Activated B cell treated with CpG ODN at 0.5 μM for 24 hours (primary cell): ENCODE measurements at regions of chrX and their contacts with region 1.

Region 1: GRCh38 chrX:23817172-23817601 is 34.2 kb downstream of the SAT1 start:
- DNase-seq: peak; percentile 27
- ATAC-seq: peak; percentile 98
- H3K4me3 Mint-ChIP-seq: no peak overlapping the region
- H3K27ac Mint-ChIP-seq: peak overlapping the region; percentile 93
- H3K4me1 Mint-ChIP-seq: peaks cover 6% of the 10 kb centered on the region
- H3K27me3 Mint-ChIP-seq: no peaks in the 10 kb centered on the region
- CTCF ChIP-seq: no peak

Region 2: DNA sequence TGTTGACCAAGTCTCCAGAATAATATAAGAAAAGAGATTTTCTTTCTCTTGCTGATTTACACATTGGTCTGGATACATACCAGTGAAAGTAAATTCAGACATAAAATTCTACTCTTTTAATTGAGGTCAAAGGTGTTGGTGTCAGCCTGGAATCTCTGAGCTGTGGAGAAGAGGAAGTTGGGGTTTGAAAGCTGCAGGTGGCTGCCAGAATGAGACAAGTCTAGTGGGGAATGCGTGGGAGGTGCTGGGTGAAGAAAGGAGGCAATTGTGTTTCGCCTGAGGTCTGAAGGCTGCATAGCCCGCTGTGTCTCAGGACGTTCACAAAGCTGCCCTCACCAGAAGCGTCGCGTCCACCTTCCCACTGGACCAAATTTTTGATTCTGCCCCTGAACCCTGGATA is 1753.9 kb before region 1 on chrX:
- CTCF ChIA-PET with region 1: no interaction called
- POLR2A ChIA-PET with region 1: interaction called, 10 read pairs
- intact Hi-C with region 1: no loop called
- DNase-seq: peak; percentile 25
- ATAC-seq: peak; percentile 90
- H3K4me3 Mint-ChIP-seq: peak overlapping the region; percentile 41
- H3K27ac Mint-ChIP-seq: peak overlapping the region; percentile 80
- H3K4me1 Mint-ChIP-seq: peaks cover 76% of the 10 kb centered on the region
- H3K27me3 Mint-ChIP-seq: no peaks in the 10 kb centered on the region
- CTCF ChIP-seq: no peak

Region 3: GRCh38 chrX:23861215-23861896 is 44.2 kb after region 1 on chrX:
- CTCF ChIA-PET with region 1: no interaction called
- POLR2A ChIA-PET with region 1: no interaction called
- intact Hi-C with region 1: no loop called
- DNase-seq: no peak
- ATAC-seq: no peak
- H3K4me3 Mint-ChIP-seq: no peak overlapping the region
- H3K27ac Mint-ChIP-seq: no peak overlapping the region
- H3K4me1 Mint-ChIP-seq: no peaks in the 10 kb centered on the region
- H3K27me3 Mint-ChIP-seq: no peaks in the 10 kb centered on the region
- CTCF ChIP-seq: no peak